ENCODE measurements at regions of chr22 and their contacts with region 1.

Region 1: DNA sequence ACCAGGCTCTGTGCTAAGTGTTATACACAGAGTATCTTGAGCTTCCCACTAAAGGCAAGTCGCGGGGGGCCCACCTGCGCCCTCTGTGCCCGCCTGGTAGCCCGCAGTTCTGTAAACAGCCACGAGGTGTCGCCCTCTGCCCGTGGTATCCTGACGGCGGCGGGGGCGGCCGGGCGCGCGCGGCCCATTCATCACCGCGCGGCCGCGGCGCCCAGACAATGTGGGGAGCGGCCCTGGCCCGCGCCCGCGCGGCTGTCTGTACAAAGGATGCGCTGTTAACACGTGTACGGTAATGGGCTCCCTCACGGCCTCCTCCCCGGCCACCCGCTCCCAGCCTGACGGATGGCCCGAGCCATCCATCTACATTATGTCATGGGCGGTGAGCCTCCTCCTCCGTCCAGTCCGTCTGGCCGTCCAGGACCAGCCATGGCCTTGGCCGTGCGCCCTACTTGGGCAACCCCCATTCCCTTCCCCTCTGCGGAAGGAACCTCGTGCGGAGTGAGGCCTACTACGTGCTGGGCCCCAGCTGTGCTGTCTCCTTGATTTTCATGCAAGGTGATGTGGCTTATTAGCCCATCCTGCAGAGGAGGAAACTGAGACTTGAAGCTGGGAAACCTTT is 99.4 kb downstream of the MIAT start:
- DNase-seq: peak; percentile 38
- ATAC-seq: peak; percentile 47
- H3K4me3 Mint-ChIP-seq: no peak overlapping the region
- H3K27ac Mint-ChIP-seq: no peak overlapping the region
- H3K4me1 Mint-ChIP-seq: no peaks in the 10 kb centered on the region
- H3K27me3 Mint-ChIP-seq: no peaks in the 10 kb centered on the region
- CTCF ChIP-seq: no peak

Region 2: GRCh38 chr22:26245001-26245400 is 511.8 kb before region 1 on chr22:
- CTCF ChIA-PET with region 1: no interaction called
- POLR2A ChIA-PET with region 1: no interaction called
- intact Hi-C with region 1: no loop called
- DNase-seq: no peak
- ATAC-seq: no peak
- H3K4me3 Mint-ChIP-seq: no peak overlapping the region
- H3K27ac Mint-ChIP-seq: no peak overlapping the region
- H3K4me1 Mint-ChIP-seq: no peaks in the 10 kb centered on the region
- H3K27me3 Mint-ChIP-seq: peaks cover 16% of the 10 kb centered on the region
- CTCF ChIP-seq: no peak

Region 3: GRCh38 chr22:26685601-26686000 is 71.2 kb before region 1 on chr22:
- CTCF ChIA-PET with region 1: no interaction called
- POLR2A ChIA-PET with region 1: no interaction called
- intact Hi-C with region 1: no loop called
- DNase-seq: no peak
- ATAC-seq: no peak
- H3K4me3 Mint-ChIP-seq: no peak overlapping the region
- H3K27ac Mint-ChIP-seq: no peak overlapping the region
- H3K4me1 Mint-ChIP-seq: peaks cover 15% of the 10 kb centered on the region
- H3K27me3 Mint-ChIP-seq: no peaks in the 10 kb centered on the region
- CTCF ChIP-seq: no peak

Region 4: DNA sequence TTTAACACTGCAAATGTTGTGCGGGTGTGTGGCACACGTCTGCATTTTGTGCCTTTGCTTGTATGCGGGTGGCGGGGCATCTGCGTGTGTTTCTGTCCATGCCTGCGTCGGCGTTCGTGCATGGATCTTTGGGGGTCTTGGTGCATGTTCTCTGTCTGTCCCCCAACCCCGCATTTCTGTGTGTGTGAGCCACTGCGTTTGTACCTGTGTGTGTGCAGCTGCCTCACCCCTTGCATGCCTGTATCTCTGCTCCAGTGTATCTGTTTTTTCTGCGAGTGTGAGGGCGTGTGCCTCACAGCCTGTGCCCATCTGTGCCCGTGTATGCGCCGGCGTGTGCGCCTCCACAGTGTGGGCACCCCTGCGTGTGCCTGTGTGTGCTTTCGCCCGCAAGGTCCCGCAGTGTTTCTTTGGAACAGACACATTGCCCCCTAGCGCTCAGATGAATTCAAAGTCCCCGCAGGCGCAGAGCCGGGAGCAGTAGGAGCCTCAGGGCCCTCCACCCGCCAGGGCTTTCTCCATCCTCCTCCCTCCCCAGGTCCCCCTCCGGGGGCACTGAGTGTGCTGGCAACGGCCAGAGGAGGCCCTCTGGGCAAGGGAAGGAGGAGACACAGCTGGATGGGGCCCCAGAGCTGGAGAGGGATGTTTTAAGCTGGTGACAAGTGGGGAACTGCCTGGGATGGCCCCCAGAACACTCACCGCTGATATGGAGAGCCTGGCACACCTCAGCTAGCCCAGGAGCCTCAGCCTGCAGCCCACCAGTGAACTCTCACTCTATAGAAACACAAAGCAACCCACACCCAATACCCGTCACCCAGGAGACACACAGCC is 1047.9 kb after region 1 on chr22:
- CTCF ChIA-PET with region 1: no interaction called
- POLR2A ChIA-PET with region 1: no interaction called
- intact Hi-C with region 1: loop called (anchors 5 kb)
- DNase-seq: no peak
- ATAC-seq: no peak
- H3K4me3 Mint-ChIP-seq: peak overlapping the region; percentile 53
- H3K27ac Mint-ChIP-seq: no peak overlapping the region
- H3K4me1 Mint-ChIP-seq: peaks cover 12% of the 10 kb centered on the region
- H3K27me3 Mint-ChIP-seq: peaks cover 39% of the 10 kb centered on the region
- CTCF ChIP-seq: no peak

Measured in activated B cell treated with CpG ODN at 0.5 μM for 24 hours (primary cell).